ENCODE measurements at regions of chr13 and their contacts with region 1.

Region 1: DNA sequence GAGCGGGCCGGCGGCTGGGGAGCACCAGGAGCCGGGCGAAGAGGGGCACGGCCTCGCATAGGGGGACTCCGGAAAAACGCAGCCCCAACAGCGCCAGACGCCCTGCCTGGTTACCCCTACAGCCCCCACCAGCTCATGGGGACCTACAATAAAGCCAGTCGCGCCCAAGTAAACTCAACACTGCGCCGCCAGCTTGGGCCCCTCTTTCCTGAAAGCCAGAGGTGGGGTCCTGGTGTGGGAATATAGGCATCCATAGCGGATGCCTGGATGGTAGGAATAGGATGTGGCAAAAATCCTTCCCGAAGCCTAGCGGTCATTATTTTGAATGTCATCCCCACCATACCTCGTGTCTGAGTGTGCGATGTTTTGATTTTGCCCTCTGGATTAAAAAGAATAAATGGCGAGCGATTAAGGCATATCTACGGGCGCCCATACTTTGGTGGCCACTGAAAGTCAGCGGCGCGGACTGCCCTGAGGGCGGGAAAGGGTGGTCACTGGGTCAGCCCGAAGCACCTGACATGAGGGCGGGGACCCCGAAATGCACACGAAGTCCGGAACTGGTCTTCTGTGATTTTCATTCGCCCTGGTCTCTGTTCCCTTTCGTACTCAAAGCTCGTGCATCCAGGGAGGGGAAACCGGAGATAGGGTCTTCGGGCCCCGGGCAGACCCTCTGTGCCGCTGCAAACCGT is at the starts of genes NHLRC3 and PROSER1:
- DNase-seq: peak; percentile 87
- ATAC-seq: peak; percentile 74
- H3K4me3 Mint-ChIP-seq: peak within 1 kb of the TSS; percentile 98
- H3K27ac Mint-ChIP-seq: peak within 1 kb of the TSS; percentile 97
- H3K4me1 Mint-ChIP-seq: peaks cover 45% of the 10 kb centered on the region
- H3K27me3 Mint-ChIP-seq: no peaks in the 10 kb centered on the region
- total RNA-seq, gene NHLRC3: 9.0 to 12.3 TPM
- total RNA-seq, gene PROSER1: 64.8 to 75.4 TPM

Region 2: DNA sequence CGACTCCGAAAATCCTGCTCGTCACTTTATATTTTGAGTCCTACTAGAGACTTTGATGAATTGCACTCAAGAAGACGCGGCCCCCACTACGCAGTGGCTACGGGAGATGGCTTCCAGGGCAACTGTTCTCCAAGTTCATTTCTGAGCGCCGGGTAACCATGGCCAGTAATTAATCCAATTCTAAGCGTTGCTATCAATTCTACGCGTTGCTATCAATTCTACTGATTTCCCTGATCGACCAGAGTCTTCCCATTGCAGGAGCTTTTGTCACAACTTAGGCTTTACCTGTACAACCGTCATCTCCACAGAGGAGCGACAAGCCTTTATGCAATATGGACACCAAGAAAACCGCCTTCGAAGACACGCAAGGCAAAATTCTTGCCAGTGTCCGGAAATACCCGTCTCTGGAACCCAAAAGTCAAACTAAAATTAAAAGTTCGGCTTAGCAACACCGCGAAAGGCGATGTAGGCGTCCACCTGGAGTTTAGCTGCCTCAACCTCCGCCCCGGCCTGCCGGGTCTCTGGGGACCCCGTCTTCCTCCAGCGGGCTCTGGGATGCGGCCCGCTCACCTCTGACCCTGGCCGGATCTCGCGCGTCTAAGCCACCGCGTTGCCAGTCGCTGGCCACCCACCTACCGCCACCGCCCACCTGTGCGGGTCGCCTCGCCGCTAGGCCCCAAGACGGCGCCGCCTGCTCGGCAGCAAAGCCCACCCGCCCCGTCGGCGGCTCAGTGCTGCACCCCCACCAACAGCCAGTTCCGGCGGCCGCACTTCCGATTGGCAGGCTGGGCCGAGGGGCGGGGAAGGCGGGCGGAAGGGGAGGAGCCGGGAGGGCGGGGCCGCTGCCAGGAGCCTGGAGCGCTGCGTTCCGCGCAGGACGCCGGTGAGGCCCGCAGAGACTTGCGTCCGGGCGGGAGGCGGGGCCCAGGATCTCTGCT is 1978.8 kb before region 1 on chr13 and contains the start of gene SUPT20H:
- CTCF ChIA-PET with region 1: interaction called, 4 read pairs
- POLR2A ChIA-PET with region 1: no interaction called
- intact Hi-C with region 1: loop called in 1 of 2 experiments (anchors 2 kb)
- DNase-seq: peak; percentile 97
- ATAC-seq: peak; percentile 98
- H3K4me3 Mint-ChIP-seq: peak within 1 kb of the TSS; percentile 98
- H3K27ac Mint-ChIP-seq: peak within 1 kb of the TSS; percentile 88
- H3K4me1 Mint-ChIP-seq: peaks cover 32% of the 10 kb centered on the region
- H3K27me3 Mint-ChIP-seq: no peaks in the 10 kb centered on the region
- total RNA-seq, gene SUPT20H: 67.2 to 69.4 TPM

Region 3: GRCh38 chr13:38933777-38934176 is 104.2 kb before region 1 on chr13:
- CTCF ChIA-PET with region 1: no interaction called
- POLR2A ChIA-PET with region 1: no interaction called
- intact Hi-C with region 1: no loop called
- DNase-seq: no peak
- ATAC-seq: no peak
- H3K4me3 Mint-ChIP-seq: no peak overlapping the region
- H3K27ac Mint-ChIP-seq: no peak overlapping the region
- H3K4me1 Mint-ChIP-seq: no peaks in the 10 kb centered on the region
- H3K27me3 Mint-ChIP-seq: peaks cover 13% of the 10 kb centered on the region

Region 4: DNA sequence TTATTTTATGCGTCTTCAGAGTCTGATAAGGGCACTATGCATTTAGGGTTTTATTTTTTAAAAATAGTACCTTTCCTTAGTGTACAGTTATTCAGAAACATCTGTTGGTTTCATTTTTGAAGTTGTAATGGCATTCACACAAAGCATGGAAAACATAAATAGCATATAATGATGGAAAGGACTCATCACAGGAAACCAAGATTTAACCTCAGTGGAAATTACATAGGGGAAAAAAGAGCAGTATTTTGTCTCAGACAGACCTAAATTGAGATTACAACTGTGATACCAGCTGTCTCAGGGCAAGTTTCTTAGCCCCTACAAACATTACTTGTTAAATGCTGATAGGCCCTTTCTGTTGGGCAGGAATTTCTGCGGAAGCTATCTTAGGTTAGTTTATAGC is 57.5 kb after region 1 on chr13:
- CTCF ChIA-PET with region 1: no interaction called
- POLR2A ChIA-PET with region 1: interaction called, 7 read pairs
- intact Hi-C with region 1: loop called (anchors 1 to 5 kb)
- DNase-seq: no peak
- ATAC-seq: peak; percentile 85
- H3K4me3 Mint-ChIP-seq: peak overlapping the region; percentile 15
- H3K27ac Mint-ChIP-seq: peak overlapping the region; percentile 75
- H3K4me1 Mint-ChIP-seq: peaks cover 31% of the 10 kb centered on the region
- H3K27me3 Mint-ChIP-seq: no peaks in the 10 kb centered on the region

Region 5: DNA sequence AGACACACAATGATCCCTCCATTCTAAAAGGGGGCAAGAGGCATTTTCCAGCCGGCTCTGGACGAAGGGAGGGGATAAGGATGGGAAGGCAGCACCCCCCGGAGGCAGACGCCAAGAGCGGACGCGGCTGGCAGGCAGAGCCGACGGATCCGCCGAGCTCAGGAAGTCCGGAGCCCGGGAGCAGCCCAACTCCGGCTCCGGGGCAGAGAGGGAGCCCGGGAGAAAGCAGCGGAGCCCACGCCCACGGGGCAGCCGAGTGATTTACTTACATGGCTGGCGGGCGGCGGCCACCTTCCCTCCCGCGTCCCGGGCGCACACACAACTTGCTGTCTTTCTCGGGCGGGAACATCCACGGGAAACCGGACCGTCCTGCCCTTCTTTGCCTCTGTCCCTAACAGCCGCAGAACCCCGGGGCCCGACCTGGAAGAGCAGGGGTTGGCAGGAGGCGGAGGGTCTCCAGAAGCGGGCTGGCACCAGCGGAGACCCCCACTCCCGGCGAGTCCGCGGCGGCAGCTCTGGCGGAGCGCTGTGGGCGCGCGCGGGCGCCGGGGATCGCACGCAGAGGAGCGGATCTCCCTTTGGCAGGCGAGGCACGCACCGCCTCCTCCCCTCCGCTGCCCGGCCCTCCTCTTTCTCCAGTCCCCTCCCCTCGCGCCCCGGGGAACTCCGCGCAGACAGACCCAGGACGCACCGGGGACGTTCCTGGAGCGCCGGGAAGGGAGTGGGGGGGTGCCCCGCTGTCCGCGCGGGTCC is 564.8 kb after region 1 on chr13 and contains the start of gene LHFPL6:
- CTCF ChIA-PET with region 1: no interaction called
- POLR2A ChIA-PET with region 1: no interaction called
- intact Hi-C with region 1: loop called (anchors 2 to 5 kb)
- DNase-seq: peak; percentile 85
- ATAC-seq: peak; percentile 99
- H3K4me3 Mint-ChIP-seq: peak within 1 kb of the TSS; percentile 72
- H3K27ac Mint-ChIP-seq: no peak within 1 kb of the TSS
- H3K4me1 Mint-ChIP-seq: peaks cover 6% of the 10 kb centered on the region
- H3K27me3 Mint-ChIP-seq: peaks cover 37% of the 10 kb centered on the region
- total RNA-seq, gene LHFPL6: 1.2 TPM

Region 6: GRCh38 chr13:40770934-40771618 is 1733.1 kb after region 1 on chr13 and contains the start of gene MRPS31:
- CTCF ChIA-PET with region 1: no interaction called
- POLR2A ChIA-PET with region 1: no interaction called
- intact Hi-C with region 1: loop called in 1 of 2 experiments (anchors 10 kb)
- DNase-seq: peak; percentile 97
- ATAC-seq: peak; percentile 99
- H3K4me3 Mint-ChIP-seq: peak within 1 kb of the TSS; percentile 89
- H3K27ac Mint-ChIP-seq: peak within 1 kb of the TSS; percentile 97
- H3K4me1 Mint-ChIP-seq: peaks cover 30% of the 10 kb centered on the region
- H3K27me3 Mint-ChIP-seq: no peaks in the 10 kb centered on the region
- total RNA-seq, gene MRPS31: 45.8 to 46.1 TPM